ENCODE measurements at regions of chr10 and their contacts with region 1.

Region 1: DNA sequence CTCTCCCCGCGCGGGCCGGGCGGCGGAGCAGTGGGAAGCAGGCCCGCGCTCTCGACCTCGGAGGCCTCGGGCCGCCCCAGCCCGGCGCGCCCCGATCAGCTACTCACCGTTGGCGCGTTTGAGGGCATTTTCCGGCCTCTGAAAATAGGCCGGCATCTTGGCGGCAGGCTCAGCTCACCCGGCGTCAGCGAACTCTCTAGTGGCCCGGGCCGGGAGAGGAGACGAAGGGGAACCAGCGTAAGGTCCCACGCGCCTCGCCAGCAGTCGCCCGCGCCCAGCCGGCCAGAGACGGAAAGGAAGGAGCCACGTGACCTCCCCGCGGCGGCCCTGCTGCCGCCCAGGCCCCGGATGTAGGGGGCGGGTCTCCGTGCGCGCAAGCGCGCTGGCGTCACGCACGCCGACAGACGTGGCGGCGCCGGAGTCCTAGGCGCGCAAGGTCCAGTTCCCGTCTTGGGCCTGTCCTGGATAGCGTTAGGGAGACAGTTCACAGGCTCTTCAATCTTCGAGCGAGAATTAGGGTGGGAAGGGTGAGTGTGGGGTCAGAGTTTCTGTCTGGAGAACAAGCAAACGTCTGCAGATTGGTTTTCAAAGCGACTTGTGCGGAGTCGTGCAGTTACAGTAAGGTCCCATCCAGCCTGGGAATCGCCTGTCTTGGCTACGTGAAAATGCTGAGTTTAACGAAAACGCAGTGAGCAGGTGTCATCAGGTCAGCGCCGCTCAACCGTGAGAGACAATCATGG is at the start of gene EIF3A:
- DNase-seq: peak; percentile 95
- ATAC-seq: peak; percentile 81
- H3K4me3 ChIP-seq: peak within 1 kb of the TSS; percentile 69 to 93 (median 86)
- H3K4me3 Mint-ChIP-seq: peak within 1 kb of the TSS; percentile 96
- H3K27ac ChIP-seq: peak within 1 kb of the TSS; percentile 92 to 97
- H3K27ac Mint-ChIP-seq: peak within 1 kb of the TSS; percentile 96
- H3K4me1 ChIP-seq: peaks cover 36 to 52% of the 10 kb centered on the region in 2 donors
- H3K4me1 Mint-ChIP-seq: peaks cover 50% of the 10 kb centered on the region
- H3K27me3 ChIP-seq: no peaks in the 10 kb centered on the region
- H3K27me3 Mint-ChIP-seq: no peaks in the 10 kb centered on the region
- CTCF ChIP-seq: no peak
- total RNA-seq, gene EIF3A: 94.3 and 94.5 TPM in 2 replicates

Region 2: GRCh38 chr10:118986815-118987790 is 93.6 kb before region 1 on chr10:
- CTCF ChIA-PET with region 1: no interaction called
- POLR2A ChIA-PET with region 1: no interaction called
- intact Hi-C with region 1: no loop called
- DNase-seq: no peak
- ATAC-seq: no peak
- H3K4me3 ChIP-seq: no peak overlapping the region
- H3K4me3 Mint-ChIP-seq: no peak overlapping the region
- H3K27ac ChIP-seq: no peak overlapping the region
- H3K27ac Mint-ChIP-seq: no peak overlapping the region
- H3K4me1 ChIP-seq: no peaks in the 10 kb centered on the region
- H3K4me1 Mint-ChIP-seq: peaks cover 4% of the 10 kb centered on the region
- H3K27me3 ChIP-seq: no peaks in the 10 kb centered on the region
- H3K27me3 Mint-ChIP-seq: peaks cover 6% of the 10 kb centered on the region
- CTCF ChIP-seq: no peak

Region 3: DNA sequence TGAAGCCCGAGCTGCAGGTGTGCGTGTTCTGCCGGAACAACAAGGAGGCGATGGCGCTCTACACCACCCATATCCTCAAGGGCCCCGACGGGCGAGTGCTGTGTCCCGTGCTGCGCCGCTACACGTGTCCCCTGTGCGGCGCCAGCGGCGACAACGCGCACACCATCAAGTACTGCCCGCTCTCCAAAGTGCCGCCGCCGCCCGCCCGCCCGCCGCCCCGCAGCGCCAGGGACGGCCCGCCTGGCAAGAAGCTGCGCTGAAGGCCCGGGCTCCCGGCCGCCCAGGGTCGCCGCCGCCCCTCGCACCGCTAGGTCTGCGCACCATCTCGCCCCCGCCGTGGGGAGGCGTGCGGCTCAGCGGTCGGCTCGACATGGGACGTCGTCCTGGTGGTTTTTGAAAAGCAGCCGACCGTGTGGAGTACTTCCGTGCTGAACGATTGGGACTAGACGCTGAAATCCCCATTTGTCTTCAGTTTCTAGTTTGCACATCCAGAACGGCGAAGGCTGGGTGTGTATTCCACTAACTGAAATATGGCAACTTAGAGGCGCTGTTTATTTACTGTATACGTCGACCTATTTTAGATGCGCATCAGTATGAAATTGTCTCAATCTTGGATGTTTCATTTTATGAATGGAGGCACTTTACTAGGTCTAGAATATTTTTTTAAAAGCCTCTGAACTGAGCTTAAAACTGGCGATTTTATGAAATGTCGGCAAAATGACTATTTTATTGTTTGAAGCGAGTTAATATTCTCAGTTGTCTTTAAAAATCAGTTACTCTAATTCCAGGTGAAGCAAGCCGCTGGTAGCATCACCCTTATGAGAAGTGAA is 50.1 kb before region 1 on chr10:
- CTCF ChIA-PET with region 1: no interaction called
- POLR2A ChIA-PET with region 1: no interaction called
- intact Hi-C with region 1: loop called (anchors 1 kb)
- DNase-seq: peak; percentile 86
- ATAC-seq: peak; percentile 68
- H3K4me3 ChIP-seq: peak overlapping the region in 3 of 5 experiments; percentile 23 to 47 (median 39)
- H3K4me3 Mint-ChIP-seq: peak overlapping the region; percentile 81
- H3K27ac ChIP-seq: no peak overlapping the region
- H3K27ac Mint-ChIP-seq: peak overlapping the region; percentile 32
- H3K4me1 ChIP-seq: peaks cover 21% of the 10 kb centered on the region in 2 donors
- H3K4me1 Mint-ChIP-seq: peaks cover 24% of the 10 kb centered on the region
- H3K27me3 ChIP-seq: peaks cover 0 to 30% (median 8%) of the 10 kb centered on the region in 4 experiments
- H3K27me3 Mint-ChIP-seq: peaks cover 25% of the 10 kb centered on the region
- CTCF ChIP-seq: peak; percentile 24

Region 4: GRCh38 chr10:119095640-119096039 is 14.9 kb after region 1 on chr10:
- CTCF ChIA-PET with region 1: no interaction called
- POLR2A ChIA-PET with region 1: interaction called, 16 read pairs
- intact Hi-C with region 1: no loop called
- DNase-seq: no peak
- ATAC-seq: no peak
- H3K4me3 ChIP-seq: no peak overlapping the region
- H3K4me3 Mint-ChIP-seq: no peak overlapping the region
- H3K27ac ChIP-seq: no peak overlapping the region
- H3K27ac Mint-ChIP-seq: no peak overlapping the region
- H3K4me1 ChIP-seq: peaks cover 7 to 14% of the 10 kb centered on the region in 2 donors
- H3K4me1 Mint-ChIP-seq: peaks cover 17% of the 10 kb centered on the region
- H3K27me3 ChIP-seq: no peaks in the 10 kb centered on the region
- H3K27me3 Mint-ChIP-seq: no peaks in the 10 kb centered on the region
- CTCF ChIP-seq: no peak

Region 5: GRCh38 chr10:119165171-119166110 is 84.8 kb after region 1 on chr10 and contains the start of gene SFXN4:
- CTCF ChIA-PET with region 1: no interaction called
- POLR2A ChIA-PET with region 1: no interaction called
- intact Hi-C with region 1: loop called (anchors 1 kb)
- DNase-seq: peak; percentile 89
- ATAC-seq: peak; percentile 92
- H3K4me3 ChIP-seq: peak within 1 kb of the TSS; percentile 46 to 86 (median 79)
- H3K4me3 Mint-ChIP-seq: peak within 1 kb of the TSS; percentile 96
- H3K27ac ChIP-seq: peak within 1 kb of the TSS; percentile 72 to 80
- H3K27ac Mint-ChIP-seq: peak within 1 kb of the TSS; percentile 93
- H3K4me1 ChIP-seq: peaks cover 7 to 19% of the 10 kb centered on the region in 2 donors
- H3K4me1 Mint-ChIP-seq: peaks cover 20% of the 10 kb centered on the region
- H3K27me3 ChIP-seq: no peaks in the 10 kb centered on the region
- H3K27me3 Mint-ChIP-seq: no peaks in the 10 kb centered on the region
- CTCF ChIP-seq: no peak
- total RNA-seq, gene SFXN4: 8.4 and 9.8 TPM in 2 replicates

Region 6: DNA sequence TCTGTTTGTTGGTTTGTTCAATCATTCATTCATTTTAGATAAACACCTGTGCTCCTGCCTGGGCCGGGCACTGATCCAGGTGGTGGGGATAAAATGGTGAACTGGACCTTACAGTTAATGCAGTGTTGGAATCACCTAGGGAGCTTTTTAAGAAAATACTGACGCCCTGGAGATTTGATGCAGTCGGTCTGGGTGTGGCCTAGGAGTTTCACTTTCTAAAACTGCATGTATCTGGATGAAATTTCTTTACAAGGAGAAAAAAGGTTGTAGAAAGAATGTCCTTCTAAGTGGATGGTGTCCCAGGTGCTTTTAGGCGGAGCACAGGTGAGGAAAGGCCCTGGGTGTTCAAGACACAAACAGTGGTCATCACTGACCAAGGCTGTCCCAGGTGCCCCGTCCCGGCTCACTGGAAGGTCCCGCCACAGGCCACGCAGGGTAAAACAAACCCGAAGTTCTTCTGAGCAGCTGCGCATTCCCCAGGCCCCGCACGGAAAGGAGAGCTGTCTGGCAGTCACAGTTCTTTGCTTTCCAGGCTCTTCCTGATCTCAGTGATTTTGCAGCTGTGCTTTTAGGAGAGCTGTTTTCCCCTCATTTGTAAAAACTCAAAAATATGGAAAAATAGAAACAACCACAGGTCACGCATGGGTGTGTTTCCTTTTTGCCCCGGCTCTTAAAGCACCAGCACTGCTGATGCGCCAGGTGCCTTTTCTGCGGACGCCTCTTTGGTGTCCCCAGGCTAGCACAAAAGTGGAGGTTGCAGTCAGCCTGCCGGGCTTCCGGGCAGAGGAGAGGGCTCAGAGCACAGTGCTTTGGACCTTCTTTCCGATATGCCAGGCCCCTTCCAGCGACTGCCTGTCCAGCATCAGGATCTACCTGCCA is 288.5 kb after region 1 on chr10:
- CTCF ChIA-PET with region 1: no interaction called
- POLR2A ChIA-PET with region 1: no interaction called
- intact Hi-C with region 1: no loop called
- DNase-seq: peak; percentile 75
- ATAC-seq: peak; percentile 76
- H3K4me3 ChIP-seq: peak overlapping the region; percentile 18 to 60 (median 55)
- H3K4me3 Mint-ChIP-seq: peak overlapping the region; percentile 90
- H3K27ac ChIP-seq: peak overlapping the region; percentile 73 to 75
- H3K27ac Mint-ChIP-seq: peak overlapping the region; percentile 97
- H3K4me1 ChIP-seq: peaks cover 59 to 62% of the 10 kb centered on the region in 2 donors
- H3K4me1 Mint-ChIP-seq: peaks cover 66% of the 10 kb centered on the region
- H3K27me3 ChIP-seq: no peaks in the 10 kb centered on the region
- H3K27me3 Mint-ChIP-seq: no peaks in the 10 kb centered on the region
- CTCF ChIP-seq: no peak

Region 7: GRCh38 chr10:119517235-119518141 is 436.8 kb after region 1 on chr10:
- CTCF ChIA-PET with region 1: no interaction called
- POLR2A ChIA-PET with region 1: no interaction called
- intact Hi-C with region 1: no loop called
- DNase-seq: peak; percentile 89
- ATAC-seq: peak; percentile 73
- H3K4me3 ChIP-seq: peak overlapping the region in 3 of 5 experiments; percentile 25 to 51 (median 33)
- H3K4me3 Mint-ChIP-seq: peak overlapping the region; percentile 64
- H3K27ac ChIP-seq: peak overlapping the region; percentile 67 to 95
- H3K27ac Mint-ChIP-seq: peak overlapping the region; percentile 94
- H3K4me1 ChIP-seq: peaks cover 31 to 38% of the 10 kb centered on the region in 2 donors
- H3K4me1 Mint-ChIP-seq: peaks cover 34% of the 10 kb centered on the region
- H3K27me3 ChIP-seq: no peaks in the 10 kb centered on the region
- H3K27me3 Mint-ChIP-seq: no peaks in the 10 kb centered on the region
- CTCF ChIP-seq: no peak

Region 8: GRCh38 chr10:119575506-119575905 is 494.8 kb after region 1 on chr10:
- CTCF ChIA-PET with region 1: no interaction called
- POLR2A ChIA-PET with region 1: no interaction called
- intact Hi-C with region 1: no loop called
- DNase-seq: no peak
- ATAC-seq: no peak
- H3K4me3 ChIP-seq: no peak overlapping the region
- H3K4me3 Mint-ChIP-seq: no peak overlapping the region
- H3K27ac ChIP-seq: peak overlapping the region in 1 of 2 donors; percentile 37
- H3K27ac Mint-ChIP-seq: no peak overlapping the region
- H3K4me1 ChIP-seq: no peaks in the 10 kb centered on the region
- H3K4me1 Mint-ChIP-seq: no peaks in the 10 kb centered on the region
- H3K27me3 ChIP-seq: no peaks in the 10 kb centered on the region
- H3K27me3 Mint-ChIP-seq: no peaks in the 10 kb centered on the region
- CTCF ChIP-seq: no peak

Measured in B cell (primary cell).